ENCODE measurements at regions of chr19 and their contacts with region 1.

Region 1: DNA sequence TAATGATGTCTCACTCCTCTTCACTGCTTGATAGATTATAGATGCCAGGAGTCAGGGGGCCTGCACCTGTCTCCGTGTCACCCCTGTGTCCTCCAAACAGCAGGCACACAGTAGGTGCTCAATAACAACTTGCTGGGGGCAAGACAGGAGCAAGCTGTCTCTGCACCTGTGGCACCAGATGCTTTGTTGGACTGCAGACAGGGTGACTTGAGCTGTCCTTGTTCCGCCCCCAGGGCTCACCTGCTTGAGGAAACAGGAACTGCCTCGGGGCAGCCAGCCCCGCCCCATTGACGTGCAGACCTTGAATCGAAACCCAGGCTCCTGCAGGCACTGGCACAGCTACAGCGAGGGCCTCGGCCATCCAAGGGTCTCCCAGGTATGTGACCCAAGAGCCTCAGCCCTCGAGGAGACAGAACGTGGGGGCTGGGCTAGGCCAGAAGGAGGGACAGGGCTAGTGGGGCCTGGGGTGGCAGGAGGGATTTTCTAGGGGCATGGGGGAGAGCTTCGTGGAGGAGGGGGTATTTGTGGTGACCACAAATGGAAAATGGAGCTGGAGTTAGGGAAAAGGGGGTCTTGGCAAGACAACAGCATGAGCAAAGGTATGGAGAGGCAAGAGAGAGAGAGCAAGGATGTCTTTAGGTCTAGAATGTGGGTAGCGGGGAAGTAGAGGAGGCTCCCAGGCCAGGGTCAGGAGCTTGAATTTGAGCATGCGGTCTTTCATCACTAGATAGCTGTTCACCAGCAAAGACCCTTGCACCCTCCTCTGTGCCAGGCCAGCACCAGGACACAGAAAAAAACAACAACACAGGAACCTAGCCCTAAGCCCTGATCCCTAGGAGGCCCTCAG is at the start of gene HSH2D:
- DNase-seq: peak; percentile 88 to 94
- H3K4me3 ChIP-seq: peak within 1 kb of the TSS; percentile 52
- H3K27ac ChIP-seq: peak within 1 kb of the TSS; percentile 71
- H3K4me1 ChIP-seq: peaks cover 30% of the 10 kb centered on the region
- H3K27me3 ChIP-seq: no peaks in the 10 kb centered on the region
- CTCF ChIP-seq: no peak
- total RNA-seq, gene HSH2D: 10.9 and 13.7 TPM in 2 replicates

Region 2: DNA sequence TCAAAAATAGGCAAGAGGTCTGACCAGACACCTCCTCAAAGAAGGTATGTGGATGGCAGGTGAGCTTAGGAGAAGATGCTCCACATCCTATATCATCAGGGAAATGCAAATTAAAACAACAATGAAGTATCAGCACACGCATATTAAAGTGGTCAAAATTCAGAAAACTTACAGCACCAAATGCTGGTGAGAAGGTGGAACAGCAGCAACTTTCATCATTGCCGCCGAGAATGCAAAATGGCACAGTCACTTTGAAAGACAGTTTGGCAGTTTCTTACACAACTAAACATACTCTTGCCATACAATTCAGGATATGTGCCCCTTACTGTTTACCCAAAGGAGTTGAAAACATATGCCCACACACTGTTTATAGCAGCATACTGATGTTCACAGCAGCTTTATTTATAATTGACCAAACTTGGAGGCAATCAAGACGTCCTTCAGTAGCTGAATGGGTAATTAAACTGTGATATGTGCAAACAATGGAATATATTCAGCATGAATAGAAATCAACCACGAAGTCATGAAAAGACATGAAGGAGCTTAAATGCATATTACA is 172.3 kb before region 1 on chr19:
- CTCF ChIA-PET with region 1: no interaction called
- POLR2A ChIA-PET with region 1: interaction called, 10 read pairs
- intact Hi-C with region 1: no loop called
- DNase-seq: peak in 1 of 2 experiments; percentile 40
- H3K4me3 ChIP-seq: no peak overlapping the region
- H3K27ac ChIP-seq: no peak overlapping the region
- H3K4me1 ChIP-seq: no peaks in the 10 kb centered on the region
- H3K27me3 ChIP-seq: peaks cover 25% of the 10 kb centered on the region; the same call in 1 of the 2 replicates
- CTCF ChIP-seq: peak; percentile 44; the same call in 1 of the 2 replicates

Region 3: DNA sequence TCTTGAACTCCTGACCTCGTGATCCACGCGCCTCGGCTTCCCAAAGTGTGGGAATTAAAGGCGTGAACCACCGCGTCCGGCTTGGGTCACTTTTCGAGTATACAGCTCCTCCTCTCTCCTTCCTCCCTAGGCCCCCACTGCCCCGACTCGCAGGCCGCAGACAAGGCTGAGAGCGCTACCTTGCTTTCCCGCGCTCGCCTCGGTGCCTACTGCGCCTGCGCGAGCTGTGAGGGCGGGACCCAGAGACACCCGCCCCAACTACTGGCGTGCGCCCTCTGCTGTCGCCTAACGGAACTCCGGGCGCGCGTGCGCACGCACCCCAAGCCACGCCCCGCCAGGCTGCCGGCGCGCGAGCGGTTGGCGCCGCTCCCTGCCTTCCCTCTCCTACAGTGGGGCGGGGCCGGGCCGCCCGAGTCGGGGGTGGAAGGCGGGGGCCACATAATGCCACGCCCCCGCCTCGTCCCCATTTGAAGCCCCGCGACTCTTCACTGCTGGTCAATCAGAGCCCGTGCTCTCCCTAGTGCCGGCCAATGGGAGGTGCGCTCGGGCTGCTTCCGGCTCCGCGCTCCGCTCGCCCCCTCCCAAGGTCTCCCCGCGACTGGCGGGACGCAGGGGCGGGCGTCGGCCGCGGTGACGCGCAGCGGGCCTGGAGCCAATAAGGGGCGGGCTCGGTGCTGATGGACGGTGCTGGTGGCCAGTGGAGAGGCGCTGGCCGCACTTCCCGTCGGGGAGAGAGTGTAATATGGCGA is 32.3 kb before region 1 on chr19 and contains the start of gene RAB8A:
- CTCF ChIA-PET with region 1: no interaction called
- POLR2A ChIA-PET with region 1: interaction called, 10 read pairs
- intact Hi-C with region 1: no loop called
- DNase-seq: peak; percentile 97 to 99
- H3K4me3 ChIP-seq: peak within 1 kb of the TSS; percentile 97
- H3K27ac ChIP-seq: peak within 1 kb of the TSS; percentile 72
- H3K4me1 ChIP-seq: peaks cover 12% of the 10 kb centered on the region
- H3K27me3 ChIP-seq: no peaks in the 10 kb centered on the region
- CTCF ChIP-seq: peak; percentile 92
- total RNA-seq, gene RAB8A: 87.9 and 104 TPM in 2 replicates

Measured in PC-9 (cell line).